BJ (cell line): ENCODE measurements at regions of chr6 and their contacts with region 1.

Region 1: GRCh38 chr6:148578245-148578732 is 168.5 kb upstream of the UST start:
- DNase-seq: no peak
- H3K4me3 ChIP-seq: no peak overlapping the region
- H3K27me3 ChIP-seq: no peaks in the 10 kb centered on the region
- CTCF ChIP-seq: peak; percentile 92

Region 2: DNA sequence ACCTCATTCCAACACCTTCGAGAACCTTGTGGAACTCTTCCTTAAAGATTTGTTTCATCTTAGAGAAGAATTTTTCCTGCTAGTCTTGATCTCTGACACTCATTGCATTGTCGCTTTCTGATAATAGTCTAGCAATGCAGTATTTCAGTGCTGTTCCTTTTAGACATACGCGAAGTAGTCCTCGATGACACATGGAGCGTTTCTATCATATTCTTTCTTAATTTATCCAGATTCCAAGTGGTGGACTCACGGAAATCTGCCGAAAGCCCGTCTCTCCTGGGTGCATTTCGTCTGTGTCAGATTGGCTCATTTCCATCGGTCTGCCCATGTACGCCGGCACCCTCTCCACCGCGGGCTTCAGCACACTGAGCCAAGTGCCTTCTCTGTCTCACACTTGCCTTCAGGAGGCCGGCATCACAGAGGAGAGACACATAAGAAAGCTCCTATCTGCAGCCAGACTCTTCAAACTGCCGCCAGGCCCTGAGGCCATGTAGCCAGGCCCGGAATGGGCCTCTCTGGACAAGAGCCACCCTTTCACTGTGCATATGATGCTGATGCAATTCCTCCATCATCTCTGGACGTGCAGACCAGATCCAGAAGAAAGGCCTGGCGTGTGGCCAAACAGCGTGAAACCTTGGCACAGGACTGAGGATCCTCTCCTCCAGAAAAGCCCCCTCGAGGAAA is 30.1 kb before region 1 on chr6:
- CTCF ChIA-PET with region 1: no interaction called
- POLR2A ChIA-PET with region 1: no interaction called
- DNase-seq: peak; percentile 53
- H3K4me3 ChIP-seq: no peak overlapping the region
- H3K27me3 ChIP-seq: no peaks in the 10 kb centered on the region
- CTCF ChIP-seq: no peak

Region 3: GRCh38 chr6:148559848-148560433 is 18.3 kb before region 1 on chr6:
- CTCF ChIA-PET with region 1: interaction called, 38 read pairs
- POLR2A ChIA-PET with region 1: no interaction called
- DNase-seq: no peak
- H3K4me3 ChIP-seq: peak overlapping the region; percentile 48
- H3K27me3 ChIP-seq: no peaks in the 10 kb centered on the region
- CTCF ChIP-seq: peak; percentile 90

Region 4: GRCh38 chr6:148593130-148593812 is 15.0 kb after region 1 on chr6:
- CTCF ChIA-PET with region 1: interaction called, 20 read pairs
- POLR2A ChIA-PET with region 1: interaction called, 6 read pairs
- DNase-seq: no peak
- H3K4me3 ChIP-seq: no peak overlapping the region
- H3K27me3 ChIP-seq: no peaks in the 10 kb centered on the region; the same call in 1 of the 2 replicates
- CTCF ChIP-seq: no peak

Region 5: DNA sequence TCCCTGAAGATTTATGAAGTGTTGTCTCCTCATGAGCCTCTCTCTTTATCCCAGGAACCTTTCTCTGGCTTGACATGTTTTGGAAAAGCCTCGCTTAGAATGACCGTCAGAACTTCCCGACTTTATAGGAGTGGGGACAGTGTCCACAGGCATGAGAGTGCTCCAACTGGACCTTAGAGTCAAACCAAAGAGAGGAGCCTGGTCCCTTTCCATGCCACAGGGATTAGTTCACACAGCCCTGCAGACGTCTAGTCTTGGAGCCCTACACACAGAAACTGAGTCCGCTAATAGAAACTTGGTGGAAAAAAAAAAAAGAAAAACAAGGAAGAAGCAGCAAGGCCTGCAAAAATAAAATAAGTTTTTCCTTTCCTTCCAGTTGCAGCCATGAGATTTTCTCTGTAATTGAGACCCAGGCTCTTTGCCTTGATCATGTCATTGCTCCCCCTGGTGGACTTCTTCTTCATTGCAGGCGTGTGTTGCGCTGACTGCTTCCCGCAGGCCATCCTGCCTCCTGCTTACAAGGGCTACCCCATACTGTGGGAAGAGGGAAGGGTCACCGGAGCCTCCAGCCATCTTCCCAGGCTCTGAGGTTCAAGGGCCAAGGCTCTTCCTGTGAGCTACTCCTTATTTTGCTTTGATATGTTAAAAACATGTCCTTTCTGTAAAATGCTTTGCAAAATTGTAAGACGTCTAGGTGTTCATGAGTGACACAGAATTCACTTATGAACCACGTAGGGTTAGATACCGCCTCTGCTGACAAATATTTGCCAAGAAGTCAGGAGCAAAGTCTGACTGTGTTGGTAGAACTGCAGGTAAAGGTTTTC is 369.5 kb after region 1 on chr6:
- CTCF ChIA-PET with region 1: interaction called, 12 read pairs
- POLR2A ChIA-PET with region 1: no interaction called
- DNase-seq: no peak
- H3K4me3 ChIP-seq: no peak overlapping the region
- H3K27me3 ChIP-seq: no peaks in the 10 kb centered on the region
- CTCF ChIP-seq: peak; percentile 90

Region 6: GRCh38 chr6:148972481-148972880 is 394.2 kb after region 1 on chr6:
- CTCF ChIA-PET with region 1: interaction called, 12 read pairs
- POLR2A ChIA-PET with region 1: no interaction called
- DNase-seq: no peak
- H3K4me3 ChIP-seq: no peak overlapping the region
- H3K27me3 ChIP-seq: peaks cover 3% of the 10 kb centered on the region
- CTCF ChIP-seq: no peak